ENCODE measurements at regions of chr12 and their contacts with region 1.

Region 1: GRCh38 chr12:68958322-68958721 is 25.4 kb upstream of the CPM start:
- DNase-seq: peak; percentile 80
- H3K4me3 Mint-ChIP-seq: peak overlapping the region; percentile 34
- H3K27ac Mint-ChIP-seq: peak overlapping the region; percentile 98
- H3K4me1 Mint-ChIP-seq: peaks cover 54% of the 10 kb centered on the region
- H3K27me3 Mint-ChIP-seq: no peaks in the 10 kb centered on the region

Region 2: GRCh38 chr12:68374307-68374982 is 583.9 kb before region 1 on chr12:
- CTCF ChIA-PET with region 1: no interaction called
- intact Hi-C with region 1: loop called (anchors 5 kb)
- DNase-seq: peak; percentile 77
- H3K4me3 Mint-ChIP-seq: no peak overlapping the region
- H3K27ac Mint-ChIP-seq: peak overlapping the region; percentile 89
- H3K4me1 Mint-ChIP-seq: peaks cover 46% of the 10 kb centered on the region
- H3K27me3 Mint-ChIP-seq: peaks cover 3% of the 10 kb centered on the region

Region 3: GRCh38 chr12:68915055-68915454 is 43.3 kb before region 1 on chr12:
- CTCF ChIA-PET with region 1: interaction called, 3 read pairs
- intact Hi-C with region 1: loop called (anchors 1 kb)
- DNase-seq: no peak
- H3K4me3 Mint-ChIP-seq: no peak overlapping the region
- H3K27ac Mint-ChIP-seq: peak overlapping the region; percentile 11
- H3K4me1 Mint-ChIP-seq: peaks cover 16% of the 10 kb centered on the region
- H3K27me3 Mint-ChIP-seq: no peaks in the 10 kb centered on the region

Region 4: DNA sequence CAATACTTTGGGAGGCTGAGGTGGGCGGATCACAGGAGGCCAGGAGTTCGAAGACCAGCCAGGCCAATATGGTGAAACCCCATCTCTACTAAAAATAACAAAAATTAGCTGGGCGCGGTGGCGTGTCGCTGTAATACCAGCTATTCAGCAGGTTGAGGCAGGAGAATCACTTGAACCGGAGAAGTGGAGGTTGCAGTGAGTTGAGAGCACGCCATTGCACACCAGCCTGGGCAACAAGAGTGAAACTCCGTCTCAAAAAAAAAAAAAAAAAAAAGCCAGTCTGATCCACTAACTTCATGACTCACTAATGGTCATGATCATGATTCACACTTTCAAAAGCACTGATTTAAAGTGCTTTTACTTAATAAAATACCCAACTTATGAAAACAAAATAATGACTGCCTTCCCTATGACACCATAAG is 13.0 kb after region 1 on chr12:
- CTCF ChIA-PET with region 1: no interaction called
- intact Hi-C with region 1: loop called (anchors 1 kb)
- DNase-seq: no peak
- H3K4me3 Mint-ChIP-seq: no peak overlapping the region
- H3K27ac Mint-ChIP-seq: no peak overlapping the region
- H3K4me1 Mint-ChIP-seq: peaks cover 10% of the 10 kb centered on the region
- H3K27me3 Mint-ChIP-seq: no peaks in the 10 kb centered on the region

Region 5: GRCh38 chr12:69052613-69053408 is 94.5 kb after region 1 on chr12:
- CTCF ChIA-PET with region 1: no interaction called
- intact Hi-C with region 1: loop called (anchors 1 kb)
- DNase-seq: peak; percentile 87
- H3K4me3 Mint-ChIP-seq: no peak overlapping the region
- H3K27ac Mint-ChIP-seq: peak overlapping the region; percentile 77
- H3K4me1 Mint-ChIP-seq: peaks cover 32% of the 10 kb centered on the region
- H3K27me3 Mint-ChIP-seq: peaks cover 12% of the 10 kb centered on the region

Region 6: GRCh38 chr12:69083689-69084088 is 125.4 kb after region 1 on chr12:
- CTCF ChIA-PET with region 1: no interaction called
- intact Hi-C with region 1: no loop called
- DNase-seq: no peak
- H3K4me3 Mint-ChIP-seq: no peak overlapping the region
- H3K27ac Mint-ChIP-seq: no peak overlapping the region
- H3K4me1 Mint-ChIP-seq: no peaks in the 10 kb centered on the region
- H3K27me3 Mint-ChIP-seq: peaks cover 7% of the 10 kb centered on the region

Region 7: DNA sequence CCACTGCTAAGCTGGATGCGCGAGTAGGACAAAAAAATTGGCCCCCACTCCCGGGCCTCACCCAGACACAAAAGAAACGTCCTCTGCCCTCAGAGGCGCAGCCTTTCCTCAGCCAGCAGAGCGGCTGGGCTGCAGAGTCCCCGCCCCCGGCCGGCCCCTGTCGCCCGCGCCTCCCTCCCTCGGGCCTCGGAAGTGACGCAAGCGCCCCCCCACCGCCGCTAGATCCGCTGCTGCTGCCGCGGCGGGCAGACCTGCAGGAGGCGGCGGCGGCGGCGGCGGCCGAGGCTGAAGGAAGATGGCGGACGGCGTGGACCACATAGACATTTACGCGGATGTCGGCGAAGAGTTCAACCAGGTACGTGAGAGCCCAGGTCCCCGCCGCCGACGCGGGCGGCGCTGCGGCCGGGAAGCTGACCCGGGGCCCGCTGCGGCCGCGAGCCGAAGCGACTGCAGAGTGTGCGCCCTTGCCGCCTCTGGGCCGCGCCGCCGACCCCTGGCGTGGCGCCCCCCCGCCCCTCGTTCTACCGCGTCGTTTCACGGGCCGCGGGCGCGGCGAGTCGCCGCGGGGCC is 281.1 kb after region 1 on chr12 and contains the start of gene CPSF6:
- CTCF ChIA-PET with region 1: no interaction called
- intact Hi-C with region 1: loop called (anchors 10 kb)
- DNase-seq: peak; percentile 97
- H3K4me3 Mint-ChIP-seq: peak within 1 kb of the TSS; percentile 91
- H3K27ac Mint-ChIP-seq: peak within 1 kb of the TSS; percentile 98
- H3K4me1 Mint-ChIP-seq: peaks cover 47% of the 10 kb centered on the region
- H3K27me3 Mint-ChIP-seq: no peaks in the 10 kb centered on the region
- total RNA-seq, gene CPSF6: 73.7 to 75.7 TPM

Measured in activated naive CD4-positive, alpha-beta T cell treated with anti-CD3 and anti-CD28 coated beads for 36 hours (primary cell).